ENCODE measurements at regions of chr5 and their contacts with region 1.

Region 1: DNA sequence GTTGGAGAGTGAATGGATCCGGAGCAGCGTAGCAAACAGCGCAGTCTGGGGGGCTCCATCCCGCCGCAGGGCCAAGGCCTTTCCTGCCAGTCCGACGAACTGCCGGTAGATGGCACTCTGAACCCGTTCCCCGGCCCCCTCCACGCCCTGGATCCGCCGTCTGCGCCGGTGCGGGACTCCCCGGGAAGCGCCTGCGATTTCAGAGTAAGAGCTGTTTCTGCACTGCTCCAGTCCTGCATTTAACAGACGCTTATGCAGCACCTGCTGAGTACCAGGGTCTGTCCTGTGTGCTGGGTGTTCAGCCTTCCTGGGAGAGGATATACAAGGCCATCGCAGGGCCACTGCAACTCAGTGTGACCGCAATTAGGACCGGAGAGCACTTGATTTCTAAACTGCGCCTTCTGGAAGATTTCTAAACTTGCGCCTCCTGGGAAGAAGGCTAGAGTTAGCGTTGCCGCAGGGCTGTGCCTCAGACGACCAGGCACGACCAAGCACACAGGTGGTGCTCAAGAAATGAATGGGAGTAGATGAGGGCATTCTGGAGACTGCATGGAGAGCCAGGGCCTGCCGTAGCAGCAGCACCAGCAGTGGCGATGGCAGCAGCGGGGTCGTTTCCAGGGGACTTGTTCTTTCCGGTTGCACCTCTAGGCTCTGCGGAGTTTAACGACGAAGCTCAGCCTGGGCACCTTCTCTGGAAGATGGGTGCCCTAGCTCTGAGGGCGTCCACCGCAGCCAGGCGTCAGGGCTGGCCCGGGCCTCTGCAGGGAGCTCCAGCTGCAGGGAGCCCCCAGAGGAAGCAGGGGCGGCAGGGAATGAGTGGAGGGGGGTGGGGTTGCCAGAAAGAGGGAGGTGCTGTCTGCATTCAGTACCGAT is 14.3 kb upstream of the TIFAB start:
- DNase-seq: peak; percentile 72 to 88 (median 74)
- ATAC-seq: peak; percentile 81 to 97 (median 91)
- H3K4me3 ChIP-seq: peak overlapping the region in 10 of 12 donors; percentile 3 to 46 (median 31)
- H3K27ac ChIP-seq: no peak overlapping the region
- H3K4me1 ChIP-seq: peaks cover 0 to 12% (median 5%) of the 10 kb centered on the region in 12 donors
- H3K27me3 ChIP-seq: peaks cover 4 to 88% (median 34%) of the 10 kb centered on the region in 9 donors
- CTCF ChIP-seq: peak; percentile 71 to 94 (median 84)
- POLR2A ChIP-seq: no peak

Region 2: DNA sequence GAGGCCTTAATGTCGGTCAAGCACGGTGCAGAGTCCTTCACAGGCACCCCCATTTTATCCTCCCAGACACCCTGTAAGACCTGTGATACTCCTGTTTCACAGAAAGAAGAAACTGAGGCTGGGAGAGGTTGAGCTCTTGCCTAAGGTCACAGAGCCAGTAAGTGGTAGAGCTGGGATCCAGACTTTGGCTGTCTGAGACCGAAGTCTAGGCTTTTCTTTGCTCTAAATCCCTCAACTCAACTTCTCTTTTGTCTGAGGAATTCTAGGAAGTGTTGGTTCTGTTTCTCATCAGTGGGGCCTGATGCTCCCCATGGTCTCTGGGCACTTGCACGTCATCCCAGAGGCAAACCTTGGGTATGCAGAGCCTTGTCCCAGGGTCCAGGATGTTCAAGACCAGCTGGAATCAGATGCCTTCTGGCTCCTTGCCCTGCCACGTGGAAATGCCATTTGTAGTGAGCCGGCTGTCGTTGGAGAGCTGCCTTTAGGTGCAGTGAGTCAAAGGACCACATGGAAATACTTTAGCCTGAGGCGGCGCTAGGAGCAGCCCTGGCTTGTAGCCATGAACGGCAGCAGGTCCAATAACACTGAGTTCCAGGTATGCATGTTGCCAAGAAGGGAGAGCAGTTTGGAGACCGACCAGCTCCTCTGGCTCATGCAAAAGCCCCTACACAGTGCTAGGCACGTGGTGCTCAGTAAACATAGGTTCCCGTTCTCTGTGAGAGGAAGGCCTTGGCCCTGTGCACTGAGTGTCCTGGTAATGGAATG is 28.4 kb before region 1 on chr5:
- intact Hi-C with region 1: no loop called
- DNase-seq: peak; percentile 58 to 91 (median 79)
- ATAC-seq: peak; percentile 57 to 74 (median 64)
- H3K4me3 ChIP-seq: no peak overlapping the region
- H3K27ac ChIP-seq: peak overlapping the region in 4 of 12 donors; percentile 30 to 87 (median 43)
- H3K4me1 ChIP-seq: peaks cover 0 to 76% (median 14%) of the 10 kb centered on the region in 12 donors
- H3K27me3 ChIP-seq: no peaks in the 10 kb centered on the region
- CTCF ChIP-seq: peak in 2 of 12 donors; percentile 4 to 8
- POLR2A ChIP-seq: no peak

Region 3: GRCh38 chr5:135551593-135552447 is 85.4 kb after region 1 on chr5:
- intact Hi-C with region 1: loop called (anchors 1 kb)
- DNase-seq: peak in 4 of 5 donors; percentile 38 to 68 (median 62)
- ATAC-seq: peak in 3 of 4 donors; percentile 78 to 90 (median 80)
- H3K4me3 ChIP-seq: no peak overlapping the region
- H3K27ac ChIP-seq: no peak overlapping the region
- H3K4me1 ChIP-seq: no peaks in the 10 kb centered on the region
- H3K27me3 ChIP-seq: peaks cover 0 to 84% (median 34%) of the 10 kb centered on the region in 9 donors
- CTCF ChIP-seq: peak; percentile 79 to 91 (median 85)
- POLR2A ChIP-seq: no peak

Region 4: DNA sequence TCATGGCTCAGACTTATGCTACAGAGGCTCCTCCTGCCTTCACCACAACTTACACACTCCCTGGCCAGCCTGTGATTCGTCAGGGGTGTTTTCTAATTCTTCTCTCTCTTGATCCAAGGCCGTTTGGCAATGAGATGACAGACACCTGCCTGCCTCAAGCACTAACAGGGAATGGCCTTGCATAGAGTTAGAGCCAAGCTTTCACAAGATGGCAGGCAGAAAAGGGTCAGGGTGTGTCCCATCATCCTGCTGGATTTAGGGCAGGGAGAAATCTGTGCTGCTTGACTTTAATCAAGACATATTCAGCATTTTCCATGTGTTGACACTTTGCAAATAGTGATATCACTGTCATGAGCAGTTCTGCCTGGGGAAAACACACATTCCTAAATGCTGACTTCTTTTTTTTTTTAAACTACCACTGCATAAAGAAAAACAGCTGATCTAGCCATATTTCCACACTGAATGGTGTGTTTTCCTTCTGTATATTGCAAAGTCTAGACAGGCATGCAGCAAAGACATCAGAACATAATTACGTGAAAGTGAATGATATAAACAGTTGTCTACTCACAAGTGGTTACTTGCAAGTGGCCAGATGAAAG is 273.1 kb after region 1 on chr5:
- intact Hi-C with region 1: loop called in 1 of 10 experiments (anchors 10 kb)
- DNase-seq: no peak
- ATAC-seq: peak in 2 of 4 donors; percentile 48 to 61
- H3K4me3 ChIP-seq: no peak overlapping the region
- H3K27ac ChIP-seq: no peak overlapping the region
- H3K4me1 ChIP-seq: peaks cover 0 to 12% (median 0%) of the 10 kb centered on the region in 12 donors
- H3K27me3 ChIP-seq: no peaks in the 10 kb centered on the region
- CTCF ChIP-seq: no peak
- POLR2A ChIP-seq: no peak

Region 5: DNA sequence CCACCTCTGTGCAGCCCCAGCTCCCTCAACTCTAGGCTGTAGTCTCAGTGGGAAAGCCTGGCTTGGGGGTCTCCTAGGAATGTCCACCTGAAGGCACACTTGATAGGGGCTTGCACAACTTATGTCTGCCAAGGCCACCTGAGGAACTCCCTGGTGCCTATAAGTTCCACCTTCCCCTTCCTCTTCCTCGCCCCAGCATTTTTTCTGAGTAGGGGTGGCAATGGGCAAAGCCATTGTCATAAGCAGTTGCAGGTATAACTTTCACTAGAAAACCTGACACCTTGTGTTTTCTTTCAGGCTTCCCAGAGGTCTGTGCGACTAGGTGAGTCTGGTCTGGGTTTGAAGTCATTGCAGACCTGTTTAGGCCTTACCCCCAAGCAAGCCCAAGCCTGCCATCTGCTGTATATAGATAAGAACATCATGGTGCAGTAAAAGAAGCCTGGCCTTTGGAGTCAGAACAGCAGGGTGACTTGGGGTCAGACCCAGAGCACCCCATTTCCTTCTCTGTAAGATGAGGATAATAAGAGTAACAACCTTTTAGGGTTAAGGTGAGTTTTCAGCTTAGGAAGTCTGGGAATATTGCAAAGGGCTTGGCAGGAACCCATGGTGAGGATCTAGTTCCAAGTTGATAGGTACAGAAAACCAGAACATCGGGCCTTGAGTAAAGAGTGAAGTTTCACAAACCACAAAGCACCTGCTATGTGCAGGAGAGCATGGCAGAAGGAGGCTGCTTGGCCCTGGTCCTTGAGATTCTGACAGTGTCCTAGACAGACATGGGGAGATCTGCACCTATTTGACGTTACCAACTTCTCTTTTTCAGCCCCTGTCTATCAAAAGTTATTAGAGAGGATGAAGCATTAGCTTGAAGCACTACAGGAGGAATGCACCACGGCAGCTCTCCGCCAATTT is 596.2 kb after region 1 on chr5:
- intact Hi-C with region 1: no loop called
- DNase-seq: peak in 1 of 5 donors; percentile 18
- ATAC-seq: peak in 1 of 4 donors; percentile 29
- H3K4me3 ChIP-seq: no peak overlapping the region
- H3K27ac ChIP-seq: no peak overlapping the region
- H3K4me1 ChIP-seq: peaks cover 0 to 42% (median 13%) of the 10 kb centered on the region in 12 donors
- H3K27me3 ChIP-seq: no peaks in the 10 kb centered on the region
- CTCF ChIP-seq: peak in 11 of 12 donors; percentile 37 to 60 (median 49)
- POLR2A ChIP-seq: no peak